Heart right ventricle (tissue), 16 donors: ENCODE measurements at regions of chr2 and their contacts with region 1.

Region 1: DNA sequence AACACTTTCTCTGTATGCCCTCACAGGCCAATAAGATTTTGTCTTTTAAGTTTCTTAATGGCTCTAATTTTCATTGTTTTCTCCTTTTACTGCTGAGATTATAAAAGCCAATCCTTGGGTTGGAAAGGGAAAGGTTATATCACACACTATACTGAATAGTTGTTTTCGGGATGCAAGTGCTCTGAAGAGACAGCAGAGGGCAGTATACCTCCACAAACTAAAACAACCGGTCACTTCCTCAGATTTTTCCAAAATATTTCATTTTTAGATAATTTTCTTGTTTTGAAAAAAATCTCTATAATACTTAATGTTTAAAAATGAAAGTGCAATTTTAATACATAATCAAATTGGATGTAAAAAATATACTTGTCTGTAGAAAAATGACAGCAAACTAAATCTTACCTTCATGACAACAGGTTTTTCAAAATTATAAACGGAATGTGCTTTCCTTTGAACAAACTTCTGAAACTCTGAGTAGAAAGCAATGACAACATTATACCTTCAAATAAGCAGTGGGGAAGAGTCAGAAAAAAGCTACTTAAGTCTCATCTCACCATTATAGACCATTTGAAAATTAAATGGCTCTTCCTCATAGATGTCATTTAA is 82.7 kb downstream of the ORC4 start:
- DNase-seq: no peak
- ATAC-seq: peak in 4 of 8 donors; percentile 44 to 62 (median 51)
- H3K4me3 ChIP-seq: no peak overlapping the region
- H3K27ac ChIP-seq: no peak overlapping the region
- H3K4me1 ChIP-seq: peaks cover 0 to 4% (median 0%) of the 10 kb centered on the region in 9 donors
- H3K27me3 ChIP-seq: no peaks in the 10 kb centered on the region
- CTCF ChIP-seq: peak; percentile 64 to 93 (median 90)

Region 2: DNA sequence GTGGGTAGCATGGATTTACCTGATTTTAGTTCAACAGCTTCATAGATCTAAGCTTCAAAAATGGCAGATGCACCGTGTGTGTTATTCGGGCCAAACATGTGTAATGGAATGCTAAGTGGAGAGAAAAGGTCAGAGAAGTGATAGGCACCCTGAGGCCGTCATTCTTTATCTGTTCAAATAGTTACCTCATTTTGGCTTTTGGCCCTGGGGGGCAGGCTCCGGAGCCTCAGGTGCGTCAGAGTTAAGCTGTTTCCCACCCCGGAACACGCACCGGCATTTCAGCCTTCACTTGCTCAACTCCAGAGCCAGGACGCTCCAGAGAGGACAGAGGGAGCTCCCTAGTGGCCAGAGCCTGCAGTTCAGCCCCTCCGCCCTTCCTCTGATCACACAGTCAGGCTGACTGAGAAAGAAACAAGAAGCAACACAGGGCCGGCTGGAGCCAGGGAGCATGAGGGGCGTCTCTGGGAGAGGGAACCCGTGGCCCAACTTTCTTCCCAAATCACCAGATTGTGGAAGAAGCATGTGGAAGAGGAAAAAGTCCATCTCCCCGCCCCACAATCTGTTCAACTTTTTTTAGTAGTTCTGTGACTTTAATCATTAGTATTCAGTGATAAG is 571.5 kb after region 1 on chr2:
- intact Hi-C with region 1: loop called in 7 of 10 experiments (anchors 1 to 5 kb)
- DNase-seq: peak; percentile 79 to 82
- ATAC-seq: peak; percentile 96 to 99 (median 98)
- H3K4me3 ChIP-seq: peak overlapping the region in 7 of 10 donors; percentile 21 to 46 (median 40)
- H3K27ac ChIP-seq: peak overlapping the region in 5 of 10 donors; percentile 16 to 61 (median 29)
- H3K4me1 ChIP-seq: peaks cover 0 to 17% (median 7%) of the 10 kb centered on the region in 9 donors
- H3K27me3 ChIP-seq: no peaks in the 10 kb centered on the region
- CTCF ChIP-seq: peak; percentile 70 to 95 (median 91)